ENCODE measurements at regions of chr16 and their contacts with region 1.

Region 1: GRCh38 chr16:8774208-8774607 is 23.2 kb downstream of the TMEM186 start:
- DNase-seq: no peak
- ATAC-seq: no peak
- H3K4me3 ChIP-seq: no peak overlapping the region
- H3K27ac ChIP-seq: no peak overlapping the region
- H3K4me1 ChIP-seq: no peaks in the 10 kb centered on the region
- H3K27me3 ChIP-seq: no peaks in the 10 kb centered on the region
- CTCF ChIP-seq: no peak
- POLR2A ChIP-seq: no peak

Region 2: GRCh38 chr16:8818504-8819270 is 44.5 kb after region 1 on chr16:
- in situ Hi-C with region 1: no loop called
- intact Hi-C with region 1: loop called (anchors 5 kb)
- DNase-seq: no peak
- ATAC-seq: no peak
- H3K4me3 ChIP-seq: no peak overlapping the region
- H3K27ac ChIP-seq: no peak overlapping the region
- H3K4me1 ChIP-seq: no peaks in the 10 kb centered on the region
- H3K27me3 ChIP-seq: no peaks in the 10 kb centered on the region
- CTCF ChIP-seq: no peak
- POLR2A ChIP-seq: no peak